ENCODE measurements at regions of chr6 and their contacts with region 1.

Region 1: GRCh38 chr6:18503593-18504231 is 116.6 kb downstream of the RNF144B start:
- DNase-seq: peak; percentile 44
- H3K4me3 Mint-ChIP-seq: no peak overlapping the region
- H3K27ac Mint-ChIP-seq: no peak overlapping the region
- H3K4me1 Mint-ChIP-seq: no peaks in the 10 kb centered on the region
- H3K27me3 Mint-ChIP-seq: peaks cover 1% of the 10 kb centered on the region

Region 2: GRCh38 chr6:18323935-18324705 is 179.6 kb before region 1 on chr6:
- CTCF ChIA-PET with region 1: interaction called, 109 read pairs
- POLR2A ChIA-PET with region 1: no interaction called
- intact Hi-C with region 1: loop called (anchors 1 kb)
- DNase-seq: no peak
- H3K4me3 Mint-ChIP-seq: no peak overlapping the region
- H3K27ac Mint-ChIP-seq: no peak overlapping the region
- H3K4me1 Mint-ChIP-seq: peaks cover 8% of the 10 kb centered on the region
- H3K27me3 Mint-ChIP-seq: peaks cover 4% of the 10 kb centered on the region

Region 3: GRCh38 chr6:18334251-18334650 is 169.5 kb before region 1 on chr6:
- CTCF ChIA-PET with region 1: interaction called, 13 read pairs
- POLR2A ChIA-PET with region 1: no interaction called
- intact Hi-C with region 1: no loop called
- DNase-seq: no peak
- H3K4me3 Mint-ChIP-seq: no peak overlapping the region
- H3K27ac Mint-ChIP-seq: no peak overlapping the region
- H3K4me1 Mint-ChIP-seq: no peaks in the 10 kb centered on the region
- H3K27me3 Mint-ChIP-seq: peaks cover 5% of the 10 kb centered on the region

Region 4: GRCh38 chr6:18387061-18387721 is 116.5 kb before region 1 on chr6 and contains the start of gene RNF144B:
- CTCF ChIA-PET with region 1: interaction called, 3 read pairs
- POLR2A ChIA-PET with region 1: no interaction called
- intact Hi-C with region 1: loop called (anchors 5 kb)
- DNase-seq: peak; percentile 75
- H3K4me3 Mint-ChIP-seq: peak within 1 kb of the TSS; percentile 91
- H3K27ac Mint-ChIP-seq: peak within 1 kb of the TSS; percentile 46
- H3K4me1 Mint-ChIP-seq: peaks cover 28% of the 10 kb centered on the region
- H3K27me3 Mint-ChIP-seq: peaks cover 4% of the 10 kb centered on the region
- total RNA-seq, gene RNF144B: 2.1 to 2.9 TPM